AG04450 (cell line): ENCODE measurements at regions of chr11 and their contacts with region 1.

Region 1: DNA sequence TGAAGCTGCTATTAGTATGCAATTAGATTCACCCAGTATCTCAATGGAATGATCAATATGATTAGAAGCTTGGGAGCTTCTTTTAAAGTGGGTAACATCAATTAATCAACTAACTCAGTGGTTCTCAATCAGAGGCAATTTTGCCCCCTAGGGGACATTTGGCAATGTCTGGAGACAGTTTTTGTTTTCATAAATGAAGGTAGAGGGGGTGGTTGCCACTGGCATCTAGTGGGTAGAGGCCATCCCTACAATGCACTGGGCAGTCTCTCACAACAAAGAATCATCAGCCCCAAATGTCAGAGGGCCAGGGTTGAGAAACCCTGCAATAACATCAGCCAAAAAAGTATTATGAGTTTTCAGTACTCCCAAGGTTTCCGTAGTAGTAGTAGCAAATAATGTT is 5.9 kb upstream of the AMOTL1 start:
- DNase-seq: no peak
- H3K4me3 ChIP-seq: no peak overlapping the region
- H3K27ac ChIP-seq: no peak overlapping the region
- H3K27me3 ChIP-seq: no peaks in the 10 kb centered on the region
- CTCF ChIP-seq: peak; percentile 40

Region 2: DNA sequence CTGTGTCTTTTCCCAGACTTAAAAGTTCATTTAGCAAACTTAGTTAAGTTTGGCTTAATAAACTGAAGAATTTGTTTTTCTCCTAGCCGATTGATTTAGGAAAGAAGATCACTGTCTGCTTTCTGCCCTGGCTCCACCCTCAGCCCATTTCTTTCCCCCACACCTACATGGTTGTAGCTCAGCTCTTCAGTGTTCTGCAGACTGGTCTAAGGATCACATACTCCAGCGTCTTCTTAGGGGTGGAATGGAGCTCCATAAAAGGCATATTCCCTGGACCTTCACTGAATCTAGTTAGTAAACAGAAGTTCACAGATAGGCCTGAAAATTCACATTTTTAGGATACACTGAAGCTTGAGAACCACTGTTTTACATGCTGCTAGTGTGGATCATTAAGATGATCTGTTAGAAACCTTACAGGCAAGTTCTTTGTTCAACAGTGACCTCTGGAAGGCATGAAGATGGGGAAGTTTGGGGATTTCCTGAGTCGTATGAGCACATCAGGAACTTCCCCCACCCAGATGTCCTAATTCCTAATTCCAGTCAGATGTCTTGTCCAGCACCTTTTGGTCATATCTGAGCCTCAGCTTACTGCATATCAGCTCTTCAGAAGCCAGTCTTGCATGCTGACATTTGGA is 178.2 kb before region 1 on chr11:
- CTCF ChIA-PET with region 1: no interaction called
- POLR2A ChIA-PET with region 1: no interaction called
- DNase-seq: no peak
- H3K4me3 ChIP-seq: no peak overlapping the region
- H3K27ac ChIP-seq: no peak overlapping the region
- H3K27me3 ChIP-seq: no peaks in the 10 kb centered on the region
- CTCF ChIP-seq: no peak

Region 3: GRCh38 chr11:94786264-94787126 is 24.3 kb after region 1 on chr11:
- CTCF ChIA-PET with region 1: interaction called, 11 read pairs
- POLR2A ChIA-PET with region 1: no interaction called
- DNase-seq: no peak
- H3K4me3 ChIP-seq: no peak overlapping the region
- H3K27ac ChIP-seq: no peak overlapping the region
- H3K27me3 ChIP-seq: no peaks in the 10 kb centered on the region
- CTCF ChIP-seq: peak; percentile 72

Region 4: DNA sequence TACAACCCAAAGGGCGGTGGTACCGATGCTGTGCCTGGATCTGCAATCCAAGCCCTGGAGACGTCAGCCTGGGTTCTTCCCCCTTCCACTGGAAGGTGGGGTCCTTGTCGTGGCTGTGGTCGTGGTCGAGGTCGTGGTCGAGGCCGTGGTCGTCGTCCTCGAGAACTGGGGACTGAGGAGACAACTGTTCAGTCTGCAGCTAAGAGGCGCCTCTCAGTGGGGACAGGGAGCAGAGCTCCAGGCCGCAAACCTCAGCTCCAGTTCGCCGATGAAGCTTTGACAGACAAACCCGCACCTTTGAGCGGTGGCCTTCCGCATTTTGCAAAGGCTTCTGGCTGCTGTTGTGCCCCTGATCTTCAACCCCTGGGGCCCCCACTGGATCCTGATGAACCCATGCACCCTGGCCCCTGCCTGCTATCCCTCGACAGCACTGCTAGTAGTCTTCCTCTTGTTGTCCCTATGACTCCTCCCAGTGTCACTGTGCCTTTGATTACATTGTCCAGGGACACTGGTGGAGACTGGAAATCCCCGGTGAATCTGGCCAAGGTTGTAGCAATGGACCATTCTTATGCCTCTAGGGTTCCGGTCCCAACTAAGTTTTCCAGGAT is 288.5 kb after region 1 on chr11:
- CTCF ChIA-PET with region 1: no interaction called
- POLR2A ChIA-PET with region 1: no interaction called
- DNase-seq: no peak
- H3K4me3 ChIP-seq: no peak overlapping the region
- H3K27ac ChIP-seq: no peak overlapping the region
- H3K27me3 ChIP-seq: no peaks in the 10 kb centered on the region
- CTCF ChIP-seq: no peak

Region 5: DNA sequence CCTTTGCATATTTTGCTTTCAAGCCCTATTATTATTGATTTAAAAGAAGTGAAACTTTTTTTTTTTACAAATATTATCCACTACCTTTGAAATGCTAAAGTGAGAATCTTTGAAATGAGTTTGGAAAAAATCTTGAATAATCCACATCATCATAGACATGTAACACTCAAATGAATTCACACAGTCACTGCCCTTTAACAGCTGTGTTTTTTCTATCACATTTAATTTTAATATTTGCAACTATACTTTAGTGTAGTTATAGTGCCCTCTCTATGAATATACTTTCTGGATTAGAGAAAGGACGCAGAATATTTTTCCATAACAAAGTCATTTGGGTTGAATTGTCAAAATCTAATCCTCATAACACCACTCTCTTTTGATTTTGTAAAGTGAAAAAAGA is 1199.5 kb after region 1 on chr11:
- CTCF ChIA-PET with region 1: no interaction called
- POLR2A ChIA-PET with region 1: no interaction called
- DNase-seq: no peak
- H3K4me3 ChIP-seq: no peak overlapping the region
- H3K27ac ChIP-seq: no peak overlapping the region
- H3K27me3 ChIP-seq: no peaks in the 10 kb centered on the region
- CTCF ChIP-seq: no peak